ENCODE measurements at regions of chr21 and their contacts with region 1.

Region 1: DNA sequence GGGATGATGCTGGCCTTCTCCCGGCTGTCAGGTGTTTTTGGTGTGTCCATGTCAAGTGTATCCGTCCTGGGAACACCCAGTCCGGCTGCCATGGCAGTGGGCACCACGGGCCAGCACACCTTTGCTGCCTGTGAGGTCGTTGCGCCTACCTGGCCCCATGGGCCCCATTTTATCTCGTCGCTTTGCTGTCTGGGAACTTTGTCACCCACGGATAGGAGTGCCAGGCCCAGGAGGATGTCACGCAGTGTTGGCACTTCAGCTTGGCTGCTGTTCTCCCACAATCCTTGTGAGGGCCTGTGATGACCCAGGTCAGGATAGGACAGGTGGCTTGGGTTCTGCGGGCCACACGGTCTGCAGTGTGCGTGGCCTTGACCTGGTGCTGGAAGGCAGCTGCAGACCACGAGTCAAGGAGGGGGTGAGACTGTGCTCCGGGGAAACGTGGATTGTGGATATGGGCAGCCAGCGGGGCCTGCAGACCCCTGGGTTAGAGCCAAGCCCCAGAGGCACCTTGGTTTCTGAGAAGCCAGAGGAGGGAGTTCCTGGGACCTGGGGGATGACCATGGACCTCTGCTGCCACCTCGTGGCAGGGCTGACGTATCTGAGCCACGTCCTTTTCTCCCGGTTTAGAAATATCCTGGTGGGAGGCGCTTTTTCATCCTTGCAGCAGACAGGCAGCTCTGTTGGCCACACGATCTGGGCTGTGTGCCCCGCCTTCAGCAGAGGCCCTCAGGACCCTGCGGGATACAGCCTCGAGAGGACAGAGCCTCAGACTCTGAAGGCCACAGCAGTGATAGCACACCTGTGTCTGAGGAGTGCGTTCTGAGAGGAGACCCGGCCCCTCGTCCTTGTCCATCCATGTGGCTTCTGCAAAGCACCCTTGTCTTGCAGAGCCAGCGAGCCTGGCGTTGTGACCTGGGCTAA is 161.1 kb upstream of the COL6A1 start:
- DNase-seq: peak; percentile 89
- H3K4me3 Mint-ChIP-seq: no peak overlapping the region
- H3K27ac Mint-ChIP-seq: peak overlapping the region; percentile 92
- H3K4me1 Mint-ChIP-seq: peaks cover 44% of the 10 kb centered on the region
- H3K27me3 Mint-ChIP-seq: no peaks in the 10 kb centered on the region

Region 2: GRCh38 chr21:45074818-45075595 is 745.4 kb before region 1 on chr21:
- CTCF ChIA-PET with region 1: no interaction called
- intact Hi-C with region 1: loop called (anchors 2 kb)
- DNase-seq: peak; percentile 34
- H3K4me3 Mint-ChIP-seq: peak overlapping the region; percentile 84
- H3K27ac Mint-ChIP-seq: peak overlapping the region; percentile 76
- H3K4me1 Mint-ChIP-seq: peaks cover 45% of the 10 kb centered on the region
- H3K27me3 Mint-ChIP-seq: no peaks in the 10 kb centered on the region

Region 3: GRCh38 chr21:45287438-45288391 is 532.7 kb before region 1 on chr21 and contains the start of gene POFUT2:
- CTCF ChIA-PET with region 1: no interaction called
- intact Hi-C with region 1: loop called (anchors 1 kb)
- DNase-seq: peak; percentile 98
- H3K4me3 Mint-ChIP-seq: peak within 1 kb of the TSS; percentile 76
- H3K27ac Mint-ChIP-seq: no peak within 1 kb of the TSS
- H3K4me1 Mint-ChIP-seq: peaks cover 13% of the 10 kb centered on the region
- H3K27me3 Mint-ChIP-seq: no peaks in the 10 kb centered on the region
- total RNA-seq, gene POFUT2: 14.4 to 15.9 TPM

Region 4: DNA sequence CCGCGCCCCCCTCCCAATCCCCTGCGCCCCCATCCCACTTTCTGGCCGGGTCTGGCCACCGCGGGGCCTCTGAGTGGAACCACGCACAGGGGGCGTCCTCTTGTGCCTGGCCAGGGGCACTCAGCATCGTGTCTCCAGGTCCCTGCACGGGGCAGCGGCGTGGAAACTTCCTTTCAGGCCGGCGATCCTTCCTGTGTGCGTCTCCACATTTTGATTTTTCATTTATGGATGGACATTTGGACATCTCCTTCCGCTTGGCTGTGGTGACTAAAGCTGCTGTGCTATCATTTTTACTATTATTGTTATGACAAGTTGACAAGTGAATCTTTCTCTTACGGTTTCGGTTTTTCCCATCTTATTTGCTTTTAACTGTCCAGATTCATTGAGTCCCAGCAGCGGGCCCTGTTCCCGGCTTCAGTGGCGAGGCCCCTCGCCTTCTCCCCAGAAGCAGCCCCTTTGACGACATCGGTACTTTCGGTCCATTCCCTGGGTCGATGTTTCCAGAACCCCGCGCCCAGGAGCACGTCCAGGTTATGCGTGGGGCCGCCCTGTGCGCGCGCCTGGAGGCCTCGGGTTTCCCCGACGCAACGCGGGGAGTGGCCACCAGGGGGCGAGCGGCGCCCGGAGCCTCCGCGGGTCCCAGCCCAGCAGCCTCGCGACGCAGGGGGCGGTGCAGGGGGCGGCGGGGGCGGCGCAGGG is 265.8 kb before region 1 on chr21:
- CTCF ChIA-PET with region 1: interaction called, 4 read pairs
- intact Hi-C with region 1: loop called (anchors 1 kb)
- DNase-seq: peak; percentile 88
- H3K4me3 Mint-ChIP-seq: peak overlapping the region; percentile 89
- H3K27ac Mint-ChIP-seq: peak overlapping the region; percentile 91
- H3K4me1 Mint-ChIP-seq: peaks cover 27% of the 10 kb centered on the region
- H3K27me3 Mint-ChIP-seq: no peaks in the 10 kb centered on the region

Region 5: DNA sequence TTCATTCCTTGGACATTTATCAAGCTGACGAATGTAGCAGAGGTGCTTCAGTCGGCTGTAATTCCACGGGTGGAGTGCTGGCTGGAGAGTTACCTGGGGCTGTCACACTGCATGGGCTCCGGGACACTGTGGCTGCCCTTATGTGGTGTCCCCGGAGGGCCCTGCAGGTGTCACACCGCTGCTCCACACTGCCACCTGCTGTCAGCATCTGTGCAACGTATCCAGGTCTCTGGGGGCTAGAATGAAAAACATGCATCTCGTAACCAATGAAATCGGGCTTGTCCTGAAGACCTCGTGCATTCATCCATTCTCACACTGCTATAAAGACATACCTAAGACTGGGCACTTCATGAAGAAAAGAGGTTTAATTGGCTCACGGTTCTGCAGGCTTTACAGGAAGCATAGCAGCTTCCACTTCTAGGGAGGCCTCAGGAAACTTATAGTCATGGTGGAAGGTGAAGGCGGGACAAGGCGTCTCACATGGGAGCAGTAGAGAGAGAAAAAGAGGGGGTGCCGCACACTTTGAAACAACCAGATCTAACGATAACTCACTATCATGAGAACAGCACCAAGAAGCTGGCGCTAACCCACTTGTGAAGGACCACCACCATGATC is 223.6 kb before region 1 on chr21:
- CTCF ChIA-PET with region 1: interaction called, 15 read pairs
- intact Hi-C with region 1: loop called (anchors 1 kb)
- DNase-seq: peak; percentile 92
- H3K4me3 Mint-ChIP-seq: no peak overlapping the region
- H3K27ac Mint-ChIP-seq: no peak overlapping the region
- H3K4me1 Mint-ChIP-seq: peaks cover 28% of the 10 kb centered on the region
- H3K27me3 Mint-ChIP-seq: no peaks in the 10 kb centered on the region

Region 6: DNA sequence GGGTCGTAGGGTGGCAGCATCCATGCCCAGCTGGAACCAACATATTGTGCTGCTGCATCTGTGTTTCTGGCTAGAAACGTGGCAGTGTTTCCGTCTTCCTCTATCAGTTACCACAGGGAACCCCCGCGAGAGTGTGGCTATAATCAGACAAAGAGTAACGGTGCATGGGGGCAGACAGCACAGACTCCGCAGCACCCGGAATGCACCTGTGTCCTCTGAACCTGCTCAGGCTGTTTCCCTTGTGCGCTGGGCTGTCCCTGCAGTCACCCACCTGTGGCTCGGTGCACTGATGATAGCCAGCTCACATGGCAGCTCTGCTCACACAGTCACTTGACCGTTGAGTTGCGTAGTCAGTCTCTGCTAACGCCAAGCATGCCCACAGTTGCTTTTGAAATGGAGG is 188.3 kb before region 1 on chr21:
- CTCF ChIA-PET with region 1: no interaction called
- intact Hi-C with region 1: no loop called
- DNase-seq: no peak
- H3K4me3 Mint-ChIP-seq: no peak overlapping the region
- H3K27ac Mint-ChIP-seq: no peak overlapping the region
- H3K4me1 Mint-ChIP-seq: peaks cover 16% of the 10 kb centered on the region
- H3K27me3 Mint-ChIP-seq: peaks cover 3% of the 10 kb centered on the region

Region 7: DNA sequence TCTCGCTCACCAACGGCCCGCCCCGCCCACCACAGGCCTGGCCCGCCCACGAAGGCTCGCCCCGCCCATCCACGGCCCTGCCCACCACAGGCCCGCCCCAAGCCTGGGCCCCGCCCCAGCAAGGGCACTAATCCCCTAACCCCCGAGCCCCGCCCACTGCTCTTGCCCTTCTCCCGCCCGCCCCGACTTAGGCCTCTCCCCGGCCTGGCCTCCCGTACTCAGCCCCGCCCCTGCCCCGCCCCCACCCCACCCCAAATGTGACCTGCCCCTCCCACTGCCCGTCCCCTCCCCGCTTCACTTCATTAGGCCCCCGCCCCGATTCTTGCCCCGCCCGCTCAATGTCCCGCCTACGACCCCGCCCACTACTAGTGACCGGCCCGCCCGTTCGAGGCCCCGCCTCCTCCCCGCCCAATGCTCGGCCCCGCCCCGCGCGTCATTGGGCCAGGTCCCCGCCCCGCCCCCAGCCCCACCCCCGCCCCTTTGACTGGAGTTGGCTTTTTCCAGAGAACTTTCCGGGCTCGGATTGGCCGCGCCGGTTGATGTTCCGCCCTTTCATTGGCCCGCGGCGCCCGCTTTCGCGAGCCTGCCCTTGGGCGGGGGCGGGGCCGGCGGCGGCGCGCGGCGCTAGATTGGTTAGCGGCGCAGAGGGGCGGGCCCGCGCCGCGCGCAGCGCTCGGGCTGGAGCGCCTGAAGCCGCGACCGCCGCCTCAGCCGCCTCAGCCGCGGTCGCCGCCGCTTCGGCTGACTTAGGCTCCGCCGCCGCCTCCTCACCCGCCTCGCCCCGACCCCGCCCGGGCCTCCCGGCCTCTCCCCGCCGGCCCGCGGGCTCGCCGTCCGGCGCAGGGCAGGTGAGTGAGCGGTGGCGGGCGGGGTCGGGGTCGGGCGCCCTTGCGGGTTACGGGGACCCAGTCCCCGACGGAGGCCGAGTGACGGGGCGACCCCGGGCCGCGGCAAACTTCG is 177.1 kb before region 1 on chr21 and contains the start of gene PCBP3:
- CTCF ChIA-PET with region 1: no interaction called
- intact Hi-C with region 1: loop called (anchors 1 kb)
- DNase-seq: peak; percentile 99
- H3K4me3 Mint-ChIP-seq: peak within 1 kb of the TSS; percentile 76
- H3K27ac Mint-ChIP-seq: no peak within 1 kb of the TSS
- H3K4me1 Mint-ChIP-seq: peaks cover 46% of the 10 kb centered on the region
- H3K27me3 Mint-ChIP-seq: peaks cover 5% of the 10 kb centered on the region
- total RNA-seq, gene PCBP3: 10.0 to 10.2 TPM

Region 8: GRCh38 chr21:45768751-45769070 is 51.7 kb before region 1 on chr21:
- CTCF ChIA-PET with region 1: no interaction called
- intact Hi-C with region 1: loop called (anchors 1 kb)
- DNase-seq: peak; percentile 66
- H3K4me3 Mint-ChIP-seq: peak overlapping the region; percentile 43
- H3K27ac Mint-ChIP-seq: peak overlapping the region; percentile 95
- H3K4me1 Mint-ChIP-seq: peaks cover 46% of the 10 kb centered on the region
- H3K27me3 Mint-ChIP-seq: no peaks in the 10 kb centered on the region

Region 9: GRCh38 chr21:45950734-45951515 is 130.5 kb after region 1 on chr21:
- CTCF ChIA-PET with region 1: no interaction called
- intact Hi-C with region 1: no loop called
- DNase-seq: no peak
- H3K4me3 Mint-ChIP-seq: no peak overlapping the region
- H3K27ac Mint-ChIP-seq: no peak overlapping the region
- H3K4me1 Mint-ChIP-seq: no peaks in the 10 kb centered on the region
- H3K27me3 Mint-ChIP-seq: no peaks in the 10 kb centered on the region

Measured in activated naive CD4-positive, alpha-beta T cell treated with anti-CD3 and anti-CD28 coated beads for 36 hours (primary cell).